ENCODE measurements at regions of chr20 and their contacts with region 1.

Region 1: GRCh38 chr20:45373353-45374100 is 4.6 kb downstream of the TP53TG5 start:
- H3K4me3 ChIP-seq: peak overlapping the region; percentile 29
- H3K27ac ChIP-seq: no peak overlapping the region
- H3K4me1 ChIP-seq: no peaks in the 10 kb centered on the region
- CTCF ChIP-seq: peak; percentile 79

Region 2: GRCh38 chr20:45322952-45323383 is 50.6 kb before region 1 on chr20:
- CTCF ChIA-PET with region 1: interaction called, 17 read pairs
- POLR2A ChIA-PET with region 1: interaction called, 3 read pairs
- H3K4me3 ChIP-seq: no peak overlapping the region
- H3K27ac ChIP-seq: no peak overlapping the region
- H3K4me1 ChIP-seq: no peaks in the 10 kb centered on the region; the same call in 1 of the 2 replicates
- CTCF ChIP-seq: peak; percentile 35; the same call in 1 of the 2 replicates

Region 3: DNA sequence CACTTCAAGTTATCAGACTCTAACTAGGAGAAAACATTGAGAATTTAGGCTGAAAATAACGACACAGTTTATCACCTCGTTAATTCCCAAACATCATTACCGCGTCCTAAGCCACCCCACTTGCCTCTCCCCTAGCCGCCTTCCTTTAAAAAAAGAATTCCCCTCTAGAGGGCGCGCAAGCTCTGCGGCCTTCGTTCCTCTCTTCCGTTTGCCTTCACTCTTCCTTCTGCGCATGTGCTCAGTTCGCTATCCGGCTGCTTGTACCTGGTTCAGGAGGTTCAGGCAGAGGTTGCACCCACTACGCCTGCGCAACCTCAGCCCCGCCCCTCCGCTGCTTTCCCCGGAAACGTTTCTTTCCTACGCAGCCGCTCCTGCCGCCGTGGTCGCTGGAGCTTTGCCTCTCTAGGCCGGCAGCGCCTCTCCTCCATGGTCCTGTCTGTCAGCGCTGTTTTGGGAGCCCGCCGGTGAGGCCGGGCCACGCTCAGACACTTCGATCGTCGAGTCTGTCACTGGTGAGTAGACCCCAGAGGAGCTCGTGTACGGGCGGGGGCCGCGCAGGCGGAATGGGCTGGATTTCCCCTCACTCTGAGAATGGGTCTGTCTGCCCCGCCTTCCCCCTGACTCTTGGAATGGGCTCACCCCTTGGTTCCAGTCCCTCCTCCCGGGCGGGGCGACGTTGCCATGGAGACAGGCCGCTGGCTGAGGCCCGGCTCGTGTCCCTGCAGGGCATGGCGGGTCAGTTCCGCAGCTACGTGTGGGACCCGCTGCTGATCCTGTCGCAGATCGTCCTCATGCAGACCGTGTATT is 10.5 kb before region 1 on chr20 and contains the start of gene SYS1:
- CTCF ChIA-PET with region 1: interaction called, 18 read pairs
- POLR2A ChIA-PET with region 1: interaction called, 11 read pairs
- H3K4me3 ChIP-seq: peak within 1 kb of the TSS; percentile 66
- H3K27ac ChIP-seq: peak within 1 kb of the TSS; percentile 31; the same call in 1 of the 2 replicates
- H3K4me1 ChIP-seq: no peaks in the 10 kb centered on the region; the same call in 1 of the 2 replicates
- CTCF ChIP-seq: peak; percentile 100

Region 4: DNA sequence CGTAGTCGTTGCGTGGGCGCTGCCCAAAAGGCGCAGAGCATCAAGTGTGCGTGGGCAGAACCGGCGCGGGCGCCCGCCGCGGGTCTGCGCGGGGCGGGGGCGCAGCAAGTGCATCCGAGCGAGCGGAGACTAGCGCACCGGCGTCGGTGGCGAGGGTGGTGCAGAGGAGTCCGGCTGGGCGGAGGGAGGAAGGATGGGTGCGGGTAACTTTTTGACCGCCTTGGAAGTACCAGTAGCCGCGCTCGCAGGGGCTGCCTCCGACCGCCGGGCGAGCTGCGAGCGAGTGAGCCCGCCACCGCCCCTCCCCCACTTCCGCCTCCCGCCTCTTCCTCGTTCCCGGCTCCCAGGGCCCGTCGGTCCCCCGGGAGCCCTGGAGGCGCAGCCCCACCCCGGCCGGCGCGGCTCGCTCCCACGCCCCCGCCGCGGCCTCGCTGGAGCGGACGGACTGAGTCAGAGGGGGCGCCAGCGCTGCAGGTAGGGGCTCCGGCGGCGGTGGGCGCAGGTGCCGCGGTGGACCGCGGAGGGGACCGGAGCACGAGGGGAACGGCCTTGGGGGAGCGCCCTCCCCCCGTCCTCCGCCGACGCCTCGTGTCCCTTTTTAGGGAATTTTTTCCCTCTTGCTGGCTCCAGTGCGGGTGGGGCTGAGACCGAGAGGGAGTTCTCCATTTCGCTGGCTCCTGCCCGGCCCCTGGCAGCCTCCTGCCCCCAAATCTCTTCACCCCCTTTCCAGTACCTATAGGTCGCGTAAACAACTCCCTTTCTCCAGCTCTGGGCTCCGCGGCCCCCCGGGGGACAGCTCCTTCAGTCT is 32.9 kb after region 1 on chr20:
- CTCF ChIA-PET with region 1: interaction called, 18 read pairs
- POLR2A ChIA-PET with region 1: interaction called, 14 read pairs
- H3K4me3 ChIP-seq: peak overlapping the region; percentile 71
- H3K27ac ChIP-seq: peak overlapping the region; percentile 92
- H3K4me1 ChIP-seq: peaks cover 10% of the 10 kb centered on the region
- CTCF ChIP-seq: peak; percentile 30; the same call in 1 of the 2 replicates

Region 5: GRCh38 chr20:45429618-45430017 is 56.1 kb after region 1 on chr20:
- CTCF ChIA-PET with region 1: interaction called, 95 read pairs
- POLR2A ChIA-PET with region 1: interaction called, 3 read pairs
- H3K4me3 ChIP-seq: no peak overlapping the region
- H3K27ac ChIP-seq: no peak overlapping the region
- H3K4me1 ChIP-seq: no peaks in the 10 kb centered on the region
- CTCF ChIP-seq: no peak

Region 6: DNA sequence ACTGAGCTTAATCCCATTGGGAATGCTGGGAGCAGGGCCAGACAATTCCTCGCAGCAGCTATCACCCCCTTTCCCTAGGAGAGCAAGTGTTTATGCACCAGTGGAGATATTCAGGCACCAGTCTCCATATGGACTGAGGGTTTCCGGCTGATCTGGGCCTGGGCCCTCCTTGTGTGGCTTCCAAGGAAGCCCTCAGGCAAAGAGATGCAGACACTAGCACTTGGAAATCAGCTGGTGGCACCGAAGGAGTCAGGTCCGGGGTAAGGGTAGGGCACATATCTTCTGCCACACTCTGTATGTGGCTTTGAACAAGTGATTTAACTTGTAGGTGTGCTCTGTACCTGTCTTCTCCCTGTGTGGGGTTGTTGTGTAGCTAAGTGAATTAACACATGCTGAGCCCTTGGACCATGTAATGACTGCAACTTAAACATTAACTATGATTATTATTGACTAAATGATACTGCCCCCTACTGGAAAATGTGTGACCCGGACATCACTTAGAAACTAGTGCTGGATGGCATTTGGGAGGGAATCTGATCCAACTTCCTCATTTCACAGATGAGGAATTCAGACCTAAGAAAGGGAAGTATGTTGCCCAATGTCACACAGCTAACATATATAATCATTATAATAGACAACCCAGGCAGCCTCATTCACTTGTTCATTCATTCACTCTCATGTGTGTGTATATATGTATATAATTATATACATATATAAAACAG is 76.7 kb after region 1 on chr20:
- CTCF ChIA-PET with region 1: interaction called, 12 read pairs
- POLR2A ChIA-PET with region 1: no interaction called
- H3K4me3 ChIP-seq: no peak overlapping the region
- H3K27ac ChIP-seq: no peak overlapping the region
- H3K4me1 ChIP-seq: no peaks in the 10 kb centered on the region
- CTCF ChIP-seq: peak; percentile 24; the same call in 1 of the 2 replicates

Region 7: GRCh38 chr20:45495501-45495941 is 122.0 kb after region 1 on chr20:
- CTCF ChIA-PET with region 1: no interaction called
- POLR2A ChIA-PET with region 1: no interaction called
- H3K4me3 ChIP-seq: no peak overlapping the region
- H3K27ac ChIP-seq: no peak overlapping the region
- H3K4me1 ChIP-seq: no peaks in the 10 kb centered on the region
- CTCF ChIP-seq: no peak